ENCODE measurements at regions of chr13 and their contacts with region 1.

Region 1: DNA sequence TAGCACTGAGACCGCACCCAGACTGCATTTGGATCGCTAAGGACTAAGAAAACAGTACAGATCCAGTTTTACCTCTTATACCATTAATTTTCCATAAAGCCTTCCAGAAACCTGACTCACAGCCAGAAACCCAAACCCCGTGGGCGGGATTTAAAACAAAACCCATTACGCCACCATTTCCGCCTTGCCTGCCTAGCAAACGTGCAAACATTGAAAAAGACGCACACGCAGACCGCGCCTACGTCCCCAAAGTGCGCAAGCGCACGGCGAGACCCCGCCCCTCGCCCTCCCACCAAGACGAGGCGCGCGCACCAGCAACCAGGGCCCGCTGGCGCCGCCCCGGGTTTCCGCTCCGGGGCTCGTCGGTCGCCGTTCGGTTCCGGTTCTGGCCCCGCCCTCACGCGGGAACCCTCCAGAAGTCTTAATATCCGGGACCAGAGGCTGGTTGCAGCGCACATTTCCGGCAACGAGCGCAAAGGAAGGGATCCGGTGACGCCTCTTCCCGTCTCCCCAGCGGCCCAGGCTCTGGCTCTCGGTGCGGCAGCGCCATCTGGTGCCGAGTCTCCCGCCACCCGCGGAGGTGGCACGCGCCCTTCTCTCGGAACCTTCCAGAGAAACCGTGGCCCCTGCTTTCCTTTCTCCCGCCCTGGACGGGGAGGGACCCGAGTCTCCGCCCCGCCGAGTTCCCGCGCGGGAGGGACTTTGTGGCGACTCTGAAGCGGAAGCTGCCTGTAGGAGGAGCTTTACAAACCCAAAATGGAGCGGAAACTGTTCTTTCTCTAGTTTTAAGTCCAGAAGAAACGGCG is 256.9 kb upstream of the STARD13 start:
- DNase-seq: peak; percentile 95 to 96
- H3K4me3 ChIP-seq: peak overlapping the region; percentile 74
- H3K27ac ChIP-seq: peak overlapping the region; percentile 99
- H3K4me1 ChIP-seq: peaks cover 28% of the 10 kb centered on the region
- H3K27me3 ChIP-seq: no peaks in the 10 kb centered on the region
- CTCF ChIP-seq: peak; percentile 76

Region 2: DNA sequence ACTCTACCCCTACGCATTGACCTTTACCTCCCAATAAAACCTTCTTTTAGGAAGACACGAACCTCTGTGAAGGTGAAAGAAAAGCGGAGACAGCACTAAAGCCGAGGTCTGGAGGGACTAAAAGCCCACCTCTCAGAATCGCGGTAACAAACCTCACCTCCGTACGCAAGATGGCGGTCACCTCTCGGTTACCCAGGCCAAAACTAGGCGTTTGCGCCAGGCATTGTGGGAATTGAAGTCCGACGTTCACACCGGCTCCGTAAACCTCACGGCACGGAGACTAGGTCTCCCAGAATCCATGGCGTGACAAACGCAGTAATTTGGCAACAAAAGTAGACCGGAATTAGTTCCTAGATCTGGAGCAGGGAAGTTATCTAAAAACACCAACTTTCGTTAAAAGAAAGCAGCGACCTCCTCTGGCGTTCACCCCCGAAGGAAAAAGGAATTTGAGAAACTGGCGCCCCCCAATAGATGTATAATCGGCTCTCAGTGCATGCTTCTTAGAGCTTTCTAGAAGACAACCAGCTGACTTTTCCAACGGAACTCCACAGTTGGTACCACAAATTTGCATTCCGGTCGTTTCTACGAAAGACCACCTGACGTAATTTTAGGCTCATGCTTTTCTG is 1003.8 kb before region 1 on chr13 and contains the start of gene N4BP2L2:
- CTCF ChIA-PET with region 1: no interaction called
- POLR2A ChIA-PET with region 1: no interaction called
- intact Hi-C with region 1: loop called (anchors 2 kb)
- DNase-seq: peak; percentile 80 to 91
- H3K4me3 ChIP-seq: peak within 1 kb of the TSS; percentile 70
- H3K27ac ChIP-seq: peak within 1 kb of the TSS; percentile 83
- H3K4me1 ChIP-seq: peaks cover 31% of the 10 kb centered on the region
- H3K27me3 ChIP-seq: no peaks in the 10 kb centered on the region
- CTCF ChIP-seq: peak; percentile 19; the same call in 1 of the 2 replicates
- total RNA-seq, gene N4BP2L2: 63.0 and 81.3 TPM in 2 replicates

Region 3: DNA sequence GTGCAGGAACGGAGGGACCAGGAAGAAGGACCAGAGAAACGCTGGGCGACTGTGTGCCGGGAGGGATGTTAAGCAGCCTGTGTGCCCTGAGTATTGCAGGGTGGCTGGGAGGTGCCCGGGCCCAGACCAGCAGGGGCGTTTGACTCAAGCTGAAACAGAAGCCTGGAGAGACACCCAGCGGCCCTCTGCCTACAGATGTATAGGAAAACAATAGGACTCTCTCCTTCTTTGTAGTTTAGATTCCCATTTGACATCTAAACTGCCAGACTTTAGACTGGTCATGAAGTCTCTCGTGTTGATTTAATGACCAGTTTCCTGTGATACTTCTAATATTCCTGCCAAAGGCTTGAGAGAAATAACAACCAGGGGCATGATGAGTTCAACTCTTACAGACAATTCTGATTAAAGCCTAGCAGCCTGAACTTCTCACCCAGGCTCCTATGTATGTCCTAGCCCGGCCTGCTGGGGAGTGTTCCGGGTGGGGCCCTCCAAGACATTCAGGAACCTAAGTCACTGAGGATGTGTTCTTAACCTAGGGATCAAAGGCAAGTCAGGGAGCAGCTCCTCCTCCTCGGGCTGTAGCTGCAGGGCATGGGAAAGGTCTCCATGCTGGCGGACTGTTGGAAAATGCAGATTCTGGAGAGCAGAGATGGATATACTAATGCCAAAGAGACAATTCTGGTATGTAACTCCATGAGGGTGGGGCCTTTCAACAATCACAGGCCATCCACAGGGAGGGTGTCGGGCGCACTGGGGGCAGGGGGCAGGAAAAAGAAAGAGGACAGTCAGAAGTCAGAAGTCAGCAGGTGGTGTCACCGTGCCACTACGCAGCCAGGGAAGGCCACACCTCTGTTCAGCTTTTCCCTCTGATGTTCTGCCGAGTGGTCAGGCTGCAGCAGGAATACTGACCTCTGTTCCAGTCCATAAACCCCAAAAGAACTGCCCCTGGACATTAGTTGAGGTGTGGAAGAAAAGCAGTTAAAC is 388.8 kb before region 1 on chr13:
- CTCF ChIA-PET with region 1: no interaction called
- POLR2A ChIA-PET with region 1: no interaction called
- intact Hi-C with region 1: loop called (anchors 2 kb)
- DNase-seq: peak; percentile 35 to 48
- H3K4me3 ChIP-seq: no peak overlapping the region
- H3K27ac ChIP-seq: peak overlapping the region; percentile 83
- H3K4me1 ChIP-seq: peaks cover 41% of the 10 kb centered on the region
- H3K27me3 ChIP-seq: no peaks in the 10 kb centered on the region
- CTCF ChIP-seq: no peak

Region 4: DNA sequence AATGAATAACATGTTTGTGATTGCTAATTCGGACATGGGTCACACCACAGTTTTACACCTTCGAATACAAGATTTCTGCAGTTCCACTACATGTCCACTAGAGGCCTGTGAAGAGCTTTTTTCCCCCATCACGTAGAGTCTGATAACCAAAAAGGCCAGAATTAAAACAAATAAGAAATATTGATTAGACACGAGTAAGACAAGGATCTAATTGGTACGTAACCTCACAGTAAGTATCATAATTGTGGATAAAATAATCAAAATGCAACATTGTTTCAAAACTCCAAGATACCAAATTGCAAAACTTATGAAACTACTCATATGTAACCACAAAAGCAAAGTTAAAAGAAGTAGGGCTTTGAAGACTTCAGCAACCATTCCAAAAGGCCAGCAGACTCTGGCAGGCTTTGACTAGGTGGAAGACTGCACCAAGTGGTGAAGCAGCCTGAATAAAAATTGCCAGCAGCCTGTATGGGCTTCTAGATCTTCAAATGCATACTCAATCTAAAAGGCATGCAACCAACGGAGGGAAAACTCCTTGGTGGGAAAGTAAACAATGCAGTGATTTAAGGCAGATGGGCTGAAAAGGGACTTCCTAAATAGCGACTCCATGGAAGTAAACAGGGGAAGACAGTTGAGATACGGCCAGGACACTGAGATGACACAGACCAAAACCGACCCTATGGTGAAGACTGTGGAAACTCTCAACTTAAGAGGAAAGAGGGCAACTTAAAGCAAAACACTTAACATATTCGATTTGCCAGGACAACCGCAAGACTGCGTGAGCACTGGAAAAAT is 313.6 kb before region 1 on chr13:
- CTCF ChIA-PET with region 1: no interaction called
- POLR2A ChIA-PET with region 1: no interaction called
- intact Hi-C with region 1: loop called (anchors 1 kb)
- DNase-seq: no peak
- H3K4me3 ChIP-seq: no peak overlapping the region
- H3K27ac ChIP-seq: no peak overlapping the region
- H3K4me1 ChIP-seq: peaks cover 10% of the 10 kb centered on the region; the same call in 1 of the 2 replicates
- H3K27me3 ChIP-seq: no peaks in the 10 kb centered on the region
- CTCF ChIP-seq: peak; percentile 98

Region 5: GRCh38 chr13:33349986-33350826 is 192.3 kb before region 1 on chr13:
- CTCF ChIA-PET with region 1: no interaction called
- POLR2A ChIA-PET with region 1: interaction called, 3 read pairs
- intact Hi-C with region 1: loop called (anchors 5 kb)
- DNase-seq: peak in 1 of 2 experiments; percentile 40
- H3K4me3 ChIP-seq: peak overlapping the region; percentile 79
- H3K27ac ChIP-seq: no peak overlapping the region
- H3K4me1 ChIP-seq: no peaks in the 10 kb centered on the region
- H3K27me3 ChIP-seq: no peaks in the 10 kb centered on the region
- CTCF ChIP-seq: no peak

Region 6: GRCh38 chr13:35164324-35164932 is 1621.9 kb after region 1 on chr13:
- CTCF ChIA-PET with region 1: no interaction called
- POLR2A ChIA-PET with region 1: no interaction called
- intact Hi-C with region 1: loop called (anchors 10 kb)
- DNase-seq: peak in 1 of 2 experiments; percentile 49
- H3K4me3 ChIP-seq: no peak overlapping the region
- H3K27ac ChIP-seq: no peak overlapping the region
- H3K4me1 ChIP-seq: no peaks in the 10 kb centered on the region
- H3K27me3 ChIP-seq: no peaks in the 10 kb centered on the region
- CTCF ChIP-seq: peak; percentile 84

Measured in PC-9 (cell line).